Left lung (tissue), 14 donors: ENCODE measurements at regions of chr19 and their contacts with region 1.

Region 1: DNA sequence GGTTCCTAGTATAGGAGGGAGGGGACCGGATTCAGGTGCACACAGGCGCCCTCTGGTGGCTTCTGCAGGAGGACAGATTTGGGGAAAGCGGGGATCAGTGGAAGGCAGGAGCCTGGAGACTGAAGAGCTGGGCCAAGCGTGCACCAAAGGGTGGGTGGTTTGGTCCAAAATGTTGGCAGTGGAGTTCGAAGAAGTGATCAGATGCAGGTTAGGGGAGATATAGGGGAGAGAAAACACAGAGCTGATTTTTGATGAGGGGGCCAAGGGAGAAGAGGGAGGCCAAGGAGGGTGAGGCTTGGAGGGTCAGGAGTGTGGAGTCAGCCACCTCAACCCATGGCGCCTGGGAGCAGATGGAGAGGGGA is 6.8 kb upstream of the CARM1 start:
- DNase-seq: peak; percentile 78 to 94 (median 86)
- ATAC-seq: peak; percentile 85
- H3K4me3 ChIP-seq: no peak overlapping the region
- H3K27ac ChIP-seq: no peak overlapping the region
- H3K4me1 ChIP-seq: peaks cover 0 to 20% of the 10 kb centered on the region in 2 donors
- H3K27me3 ChIP-seq: no peaks in the 10 kb centered on the region
- CTCF ChIP-seq: peak; percentile 77 to 89

Region 2: GRCh38 chr19:10717356-10718204 is 146.9 kb before region 1 on chr19 and contains the start of gene DNM2:
- intact Hi-C with region 1: loop called in 1 of 2 experiments (anchors 5 kb)
- DNase-seq: peak; percentile 98 to 100 (median 99)
- ATAC-seq: peak; percentile 92
- H3K4me3 ChIP-seq: peak within 1 kb of the TSS; percentile 97
- H3K27ac ChIP-seq: peak within 1 kb of the TSS; percentile 95 to 98
- H3K4me1 ChIP-seq: peaks cover 20 to 43% of the 10 kb centered on the region in 2 donors
- H3K27me3 ChIP-seq: no peaks in the 10 kb centered on the region
- CTCF ChIP-seq: peak; percentile 79 to 82
- polyA plus RNA-seq, gene DNM2: 88.4 to 119 (median 99.2) TPM

Region 3: DNA sequence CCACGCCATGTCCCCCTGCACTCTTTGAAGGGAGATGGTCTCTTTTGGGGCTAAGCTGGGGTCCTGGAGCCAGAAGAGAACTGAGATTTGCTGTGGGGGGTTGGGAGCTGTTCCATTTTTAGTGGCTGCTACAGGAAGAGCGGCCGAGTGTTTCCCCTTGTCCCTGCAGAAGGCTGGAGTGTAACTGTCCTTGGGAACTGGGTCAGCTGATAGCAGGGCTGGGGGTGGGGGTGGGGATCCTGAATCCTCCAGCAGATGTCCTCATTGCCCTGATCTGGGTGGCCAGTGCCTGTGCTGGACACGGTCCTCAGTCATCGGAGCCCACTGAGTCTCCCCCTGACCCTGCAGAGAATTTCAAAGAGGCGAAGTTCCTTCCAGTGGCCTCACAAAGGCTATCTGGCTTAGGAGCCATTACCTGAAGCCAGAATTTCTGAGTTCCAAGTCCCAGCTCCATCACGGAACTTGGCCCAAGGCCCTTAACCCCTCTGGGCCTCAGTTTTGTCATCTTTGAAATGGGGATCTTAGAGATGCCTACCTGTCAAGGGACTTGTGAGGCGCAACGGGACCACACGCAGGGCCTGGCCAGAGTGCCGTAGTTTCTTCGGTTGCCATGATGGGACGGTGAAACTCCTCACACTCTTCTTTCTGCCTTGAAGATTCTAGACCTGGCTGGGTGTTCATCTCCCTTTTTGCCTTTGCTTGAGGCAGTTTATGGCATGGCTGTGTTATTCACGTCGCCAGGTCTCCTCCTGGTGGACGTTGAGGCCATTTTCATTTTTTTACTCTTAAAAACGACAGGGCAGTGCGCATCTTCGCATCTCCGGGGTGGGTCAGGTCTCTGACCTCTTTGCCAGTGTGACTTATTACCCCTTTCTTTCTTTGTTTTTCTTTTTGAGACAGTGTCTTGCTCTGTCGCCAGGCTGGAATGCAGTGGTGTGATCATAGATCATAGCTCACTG is 94.7 kb before region 1 on chr19:
- intact Hi-C with region 1: loop called in 1 of 2 experiments (anchors 10 kb)
- DNase-seq: peak in 1 of 4 donors; percentile 60
- ATAC-seq: peak; percentile 52
- H3K4me3 ChIP-seq: no peak overlapping the region
- H3K27ac ChIP-seq: peak overlapping the region; percentile 56 to 69
- H3K4me1 ChIP-seq: peaks cover 36 to 71% of the 10 kb centered on the region in 2 donors
- H3K27me3 ChIP-seq: no peaks in the 10 kb centered on the region
- CTCF ChIP-seq: no peak